SK-N-SH (cell line): ENCODE measurements at regions of chr20 and their contacts with region 1.

Region 1: GRCh38 chr20:25294459-25295385 is 46.8 kb downstream of the PYGB start:
- DNase-seq: peak; percentile 95
- H3K4me3 ChIP-seq: no peak overlapping the region
- H3K27ac ChIP-seq: peak overlapping the region in 1 of 2 experiments; percentile 66; a peak in 2 of 4 replicates
- H3K4me1 ChIP-seq: peaks cover under 1 to 24% of the 10 kb centered on the region in 2 experiments; a peak in 1 of 4 replicates
- H3K27me3 ChIP-seq: no peaks in the 10 kb centered on the region
- CTCF ChIP-seq: peak; percentile 91
- EP300 ChIP-seq: no peak
- RAD21 ChIP-seq: peak; percentile 88

Region 2: GRCh38 chr20:24992487-24993205 is 302.1 kb before region 1 on chr20 and contains the start of gene APMAP:
- CTCF ChIA-PET with region 1: interaction called, 10 read pairs
- POLR2A ChIA-PET with region 1: no interaction called
- DNase-seq: peak; percentile 98
- H3K4me3 ChIP-seq: peak within 1 kb of the TSS; percentile 91 to 95
- H3K27ac ChIP-seq: peak within 1 kb of the TSS; percentile 76 to 89
- H3K4me1 ChIP-seq: peaks cover 17 to 20% of the 10 kb centered on the region in 2 experiments; a peak in 3 of 4 replicates
- H3K27me3 ChIP-seq: no peaks in the 10 kb centered on the region
- CTCF ChIP-seq: no peak
- EP300 ChIP-seq: no peak
- RAD21 ChIP-seq: no peak
- polyA plus RNA-seq, gene APMAP: 107 and 115 TPM in 2 replicates

Region 3: GRCh38 chr20:25273541-25274358 is 21.0 kb before region 1 on chr20:
- CTCF ChIA-PET with region 1: interaction called, 14 read pairs
- POLR2A ChIA-PET with region 1: no interaction called
- DNase-seq: no peak
- H3K4me3 ChIP-seq: no peak overlapping the region
- H3K27ac ChIP-seq: no peak overlapping the region
- H3K4me1 ChIP-seq: peaks cover 0 to 10% of the 10 kb centered on the region in 2 experiments; a peak in 1 of 4 replicates
- H3K27me3 ChIP-seq: no peaks in the 10 kb centered on the region
- CTCF ChIP-seq: no peak
- EP300 ChIP-seq: no peak
- RAD21 ChIP-seq: no peak

Region 4: DNA sequence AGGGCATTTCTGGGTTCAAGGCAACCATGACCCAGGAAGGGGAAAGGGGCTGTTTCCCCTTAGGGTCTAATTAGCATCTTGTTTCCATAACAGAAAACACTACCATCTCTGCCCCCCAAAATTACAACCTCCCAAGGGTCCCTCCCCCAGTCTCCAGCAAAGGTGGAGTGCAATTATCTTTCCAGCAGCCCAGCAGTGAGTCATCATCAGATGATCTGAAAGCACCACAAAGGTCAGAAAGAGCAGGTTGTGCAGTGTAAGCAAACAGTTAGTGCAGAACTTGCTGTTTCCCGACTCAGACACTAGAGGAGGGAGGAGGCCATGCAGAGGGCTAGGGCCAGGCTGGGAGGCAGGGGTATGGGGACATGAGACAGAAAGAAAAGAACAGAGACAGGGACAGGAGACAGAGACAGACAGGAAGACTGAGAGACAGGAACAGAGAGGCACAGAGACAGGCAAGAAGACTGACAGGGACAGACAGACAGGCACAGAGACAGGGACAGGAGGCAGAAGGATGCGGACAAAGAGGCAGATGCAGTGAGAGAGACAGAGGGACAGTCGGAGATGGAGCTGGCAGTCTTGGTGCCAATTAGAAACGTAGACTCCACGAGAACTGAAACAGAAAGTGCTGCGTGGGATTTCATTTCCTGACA is 15.7 kb after region 1 on chr20:
- CTCF ChIA-PET with region 1: interaction called, 21 read pairs
- POLR2A ChIA-PET with region 1: no interaction called
- DNase-seq: peak; percentile 81
- H3K4me3 ChIP-seq: peak overlapping the region; percentile 20 to 45; a peak in 3 of 4 replicates
- H3K27ac ChIP-seq: peak overlapping the region; percentile 90 to 91
- H3K4me1 ChIP-seq: peaks cover 27 to 35% of the 10 kb centered on the region in 2 experiments; a peak in 3 of 4 replicates
- H3K27me3 ChIP-seq: no peaks in the 10 kb centered on the region
- CTCF ChIP-seq: peak; percentile 61
- EP300 ChIP-seq: peak; percentile 36 to 63; a peak in 2 of 4 replicates
- RAD21 ChIP-seq: peak; percentile 73

Region 5: DNA sequence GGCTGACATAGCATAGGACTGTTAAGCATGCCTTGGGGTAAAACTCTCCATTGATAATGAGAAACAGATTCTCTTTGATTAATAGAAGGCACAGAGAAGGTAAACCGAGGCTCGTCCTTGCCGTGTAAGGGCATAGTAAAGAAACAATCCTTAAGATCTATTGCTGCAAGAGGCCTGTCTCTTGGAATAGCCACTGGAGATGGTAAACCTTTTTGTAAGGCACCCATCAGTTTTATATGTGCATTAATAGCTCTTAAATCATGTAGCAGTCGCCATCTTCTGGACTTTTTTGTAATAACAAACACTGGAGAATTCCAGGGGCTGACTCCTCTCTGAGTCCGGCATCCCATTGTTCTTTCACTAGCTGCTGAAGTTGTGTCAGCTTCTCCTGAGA is 104.3 kb after region 1 on chr20:
- CTCF ChIA-PET with region 1: interaction called, 104 read pairs
- POLR2A ChIA-PET with region 1: no interaction called
- DNase-seq: peak; percentile 68
- H3K4me3 ChIP-seq: no peak overlapping the region
- H3K27ac ChIP-seq: no peak overlapping the region
- H3K4me1 ChIP-seq: 0 out of 4 replicates have a peak, but pooled peaks cover 0 to 3% of the 10 kb centered on the region in 2 experiments
- H3K27me3 ChIP-seq: no peaks in the 10 kb centered on the region
- CTCF ChIP-seq: peak; percentile 71
- EP300 ChIP-seq: no peak
- RAD21 ChIP-seq: peak; percentile 87